ENCODE measurements at regions of chr12 and their contacts with region 1.

Region 1: GRCh38 chr12:113247123-113248055 is 26.1 kb downstream of the TPCN1 start:
- DNase-seq: peak; percentile 33
- H3K4me3 ChIP-seq: no peak overlapping the region
- H3K27ac ChIP-seq: peak overlapping the region in 1 of 2 experiments; percentile 94; a peak in 2 of 4 replicates
- H3K4me1 ChIP-seq: peaks cover 32 to 51% of the 10 kb centered on the region in 2 experiments
- H3K27me3 ChIP-seq: no peaks in the 10 kb centered on the region
- CTCF ChIP-seq: no peak
- EP300 ChIP-seq: no peak
- RAD21 ChIP-seq: no peak

Region 2: GRCh38 chr12:113221181-113221997 is 26.0 kb before region 1 on chr12 and contains the start of gene TPCN1:
- CTCF ChIA-PET with region 1: no interaction called
- POLR2A ChIA-PET with region 1: interaction called, 12 read pairs
- DNase-seq: peak; percentile 97
- H3K4me3 ChIP-seq: peak within 1 kb of the TSS; percentile 69 to 82
- H3K27ac ChIP-seq: peak within 1 kb of the TSS; percentile 62 to 72
- H3K4me1 ChIP-seq: peaks cover 14 to 15% of the 10 kb centered on the region in 2 experiments; a peak in 3 of 4 replicates
- H3K27me3 ChIP-seq: no peaks in the 10 kb centered on the region
- CTCF ChIP-seq: peak; percentile 11
- EP300 ChIP-seq: no peak
- RAD21 ChIP-seq: no peak
- polyA plus RNA-seq, gene TPCN1: 10.3 and 15.7 TPM in 2 replicates

Region 3: DNA sequence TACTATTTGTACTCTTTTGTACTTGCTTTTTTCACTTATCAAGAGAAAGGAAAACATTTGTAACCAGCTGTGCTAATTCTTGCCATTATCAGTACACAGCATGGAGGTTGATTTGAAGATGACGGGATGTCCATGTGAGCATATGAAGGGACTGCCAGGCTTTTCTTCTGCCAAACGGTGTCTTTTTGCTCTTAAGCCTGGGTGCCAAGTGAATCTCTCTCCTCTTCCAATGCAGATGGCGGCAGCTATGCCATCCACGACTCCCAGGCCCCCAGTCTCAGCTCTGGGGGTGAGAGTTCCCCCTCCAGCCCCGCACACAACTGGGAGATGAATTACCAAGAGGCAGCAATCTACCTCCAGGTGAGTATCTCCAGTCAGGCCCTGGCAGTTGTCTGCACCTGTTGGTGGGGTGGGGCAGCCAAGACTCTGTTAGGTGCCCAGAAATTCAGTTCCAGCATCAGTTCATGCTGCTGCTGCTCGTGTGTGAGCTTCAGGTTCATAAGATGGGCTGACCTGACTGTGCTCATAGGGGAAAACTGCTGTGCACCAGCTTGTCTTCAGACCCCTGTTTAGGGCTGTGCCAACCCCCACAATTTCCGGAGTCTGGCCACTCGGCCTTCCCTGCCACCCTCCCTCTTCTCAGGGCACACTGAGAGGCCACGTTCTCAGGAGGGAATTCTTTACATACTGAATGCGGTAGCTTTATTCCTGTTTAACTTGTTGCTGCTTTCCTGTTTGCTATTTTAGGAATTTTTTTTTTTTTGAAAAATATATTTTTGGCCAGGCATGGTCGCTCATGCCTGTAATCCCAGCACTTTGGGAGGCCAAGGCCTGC is 13.0 kb after region 1 on chr12:
- CTCF ChIA-PET with region 1: interaction called, 10 read pairs
- POLR2A ChIA-PET with region 1: interaction called, 8 read pairs
- DNase-seq: no peak
- H3K4me3 ChIP-seq: no peak overlapping the region
- H3K27ac ChIP-seq: peak overlapping the region; percentile 24 to 90; a peak in 3 of 4 replicates
- H3K4me1 ChIP-seq: peaks cover 6 to 29% of the 10 kb centered on the region in 2 experiments; a peak in 2 of 4 replicates
- H3K27me3 ChIP-seq: no peaks in the 10 kb centered on the region
- CTCF ChIP-seq: no peak
- EP300 ChIP-seq: no peak
- RAD21 ChIP-seq: no peak

Measured in SK-N-SH (cell line).